CD4-positive, alpha-beta memory T cell (primary cell): ENCODE measurements at regions of chr10 and their contacts with region 1.

Region 1: GRCh38 chr10:42638055-42638820 is at the start of gene ZNF33B:
- DNase-seq: peak; percentile 92 to 96 (median 95)
- H3K4me3 ChIP-seq: peak within 1 kb of the TSS; percentile 95 to 99
- H3K4me3 Mint-ChIP-seq: peak within 1 kb of the TSS; percentile 95 to 99 (median 98)
- H3K27ac ChIP-seq: peak within 1 kb of the TSS; percentile 84
- H3K27ac Mint-ChIP-seq: peak within 1 kb of the TSS; percentile 97 to 100 (median 98)
- H3K4me1 ChIP-seq: peaks cover 25% of the 10 kb centered on the region
- H3K4me1 Mint-ChIP-seq: peaks cover 24 to 53% (median 34%) of the 10 kb centered on the region in 4 donors
- H3K27me3 ChIP-seq: no peaks in the 10 kb centered on the region
- H3K27me3 Mint-ChIP-seq: no peaks in the 10 kb centered on the region
- total RNA-seq, gene ZNF33B: 71.3 to 76.4 TPM

Region 2: GRCh38 chr10:42552493-42553407 is 85.5 kb before region 1 on chr10:
- CTCF ChIA-PET with region 1: no interaction called
- POLR2A ChIA-PET with region 1: interaction called, 3 read pairs
- intact Hi-C with region 1: loop called (anchors 2 kb)
- DNase-seq: peak; percentile 90 to 94 (median 92)
- H3K4me3 ChIP-seq: peak overlapping the region; percentile 96 to 100
- H3K4me3 Mint-ChIP-seq: peak overlapping the region; percentile 97 to 100 (median 98)
- H3K27ac ChIP-seq: peak overlapping the region; percentile 83
- H3K27ac Mint-ChIP-seq: peak overlapping the region; percentile 88 to 98 (median 97)
- H3K4me1 ChIP-seq: peaks cover 34% of the 10 kb centered on the region
- H3K4me1 Mint-ChIP-seq: peaks cover 29 to 45% (median 38%) of the 10 kb centered on the region in 4 donors
- H3K27me3 ChIP-seq: no peaks in the 10 kb centered on the region
- H3K27me3 Mint-ChIP-seq: no peaks in the 10 kb centered on the region

Region 3: DNA sequence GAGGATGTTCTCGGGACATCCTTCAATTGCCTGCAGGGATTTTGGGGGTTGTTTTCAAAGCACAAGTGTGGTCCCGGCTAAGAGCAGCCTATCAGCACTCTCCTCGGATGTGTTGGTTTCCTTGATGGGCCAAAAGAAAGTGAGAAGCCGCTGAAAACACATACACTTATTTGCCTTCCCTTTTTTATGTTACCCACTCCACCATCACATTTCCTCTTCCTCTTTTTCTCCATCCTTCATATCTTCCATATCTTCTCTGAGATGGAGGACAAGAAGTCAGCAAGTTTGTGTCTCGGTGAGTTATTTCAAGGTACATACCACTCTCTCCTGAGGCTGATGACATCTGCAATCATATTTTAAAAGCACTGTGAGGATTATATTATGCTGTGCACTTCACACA is 63.9 kb before region 1 on chr10:
- CTCF ChIA-PET with region 1: no interaction called
- POLR2A ChIA-PET with region 1: no interaction called
- intact Hi-C with region 1: no loop called
- DNase-seq: no peak
- H3K4me3 ChIP-seq: no peak overlapping the region
- H3K4me3 Mint-ChIP-seq: no peak overlapping the region
- H3K27ac ChIP-seq: no peak overlapping the region
- H3K27ac Mint-ChIP-seq: no peak overlapping the region
- H3K4me1 ChIP-seq: no peaks in the 10 kb centered on the region
- H3K4me1 Mint-ChIP-seq: peaks cover 0 to 2% (median 0%) of the 10 kb centered on the region in 4 donors
- H3K27me3 ChIP-seq: no peaks in the 10 kb centered on the region
- H3K27me3 Mint-ChIP-seq: peaks cover 2 to 3% of the 10 kb centered on the region in 2 donors

Region 4: GRCh38 chr10:42782446-42783180 is 144.4 kb after region 1 on chr10 and contains the start of gene BMS1:
- CTCF ChIA-PET with region 1: no interaction called
- POLR2A ChIA-PET with region 1: interaction called, 14 read pairs
- intact Hi-C with region 1: loop called (anchors 2 kb)
- DNase-seq: peak; percentile 89 to 91 (median 89)
- H3K4me3 ChIP-seq: peak within 1 kb of the TSS; percentile 47 to 88
- H3K4me3 Mint-ChIP-seq: peak within 1 kb of the TSS; percentile 96 to 99 (median 98)
- H3K27ac ChIP-seq: peak within 1 kb of the TSS; percentile 74
- H3K27ac Mint-ChIP-seq: peak within 1 kb of the TSS; percentile 93 to 99 (median 96)
- H3K4me1 ChIP-seq: peaks cover 22% of the 10 kb centered on the region
- H3K4me1 Mint-ChIP-seq: peaks cover 13 to 40% (median 29%) of the 10 kb centered on the region in 4 donors
- H3K27me3 ChIP-seq: no peaks in the 10 kb centered on the region
- H3K27me3 Mint-ChIP-seq: peaks cover 2% of the 10 kb centered on the region in 2 donors
- total RNA-seq, gene BMS1: 17.3 to 18.9 TPM

Region 5: GRCh38 chr10:43407576-43408330 is 769.5 kb after region 1 on chr10:
- CTCF ChIA-PET with region 1: no interaction called
- POLR2A ChIA-PET with region 1: no interaction called
- intact Hi-C with region 1: loop called (anchors 5 kb)
- DNase-seq: peak; percentile 81 to 89 (median 84)
- H3K4me3 ChIP-seq: peak overlapping the region; percentile 83 to 85
- H3K4me3 Mint-ChIP-seq: peak overlapping the region; percentile 94 to 100 (median 98)
- H3K27ac ChIP-seq: peak overlapping the region; percentile 100
- H3K27ac Mint-ChIP-seq: peak overlapping the region; percentile 93 to 100 (median 99)
- H3K4me1 ChIP-seq: peaks cover 39% of the 10 kb centered on the region
- H3K4me1 Mint-ChIP-seq: peaks cover 18 to 53% (median 27%) of the 10 kb centered on the region in 4 donors
- H3K27me3 ChIP-seq: no peaks in the 10 kb centered on the region
- H3K27me3 Mint-ChIP-seq: no peaks in the 10 kb centered on the region